HCT116 (cell line): ENCODE measurements at regions of chr18 and their contacts with region 1.

Region 1: GRCh38 chr18:70421471-70422390 is 132.9 kb downstream of the SOCS6 start:
- DNase-seq: peak; percentile 94
- ATAC-seq: peak; percentile 58
- H3K4me3 ChIP-seq: peak overlapping the region in 1 of 2 experiments; percentile 17; a peak in 2 of 4 replicates
- H3K27ac ChIP-seq: peak overlapping the region; percentile 99
- H3K4me1 ChIP-seq: peaks cover 82 to 97% of the 10 kb centered on the region in 2 experiments
- H3K27me3 ChIP-seq: no peaks in the 10 kb centered on the region
- CTCF ChIP-seq: no peak
- POLR2A ChIP-seq: no peak
- RAD21 ChIP-seq: no peak

Region 2: GRCh38 chr18:70355620-70356385 is 65.9 kb before region 1 on chr18:
- CTCF ChIA-PET with region 1: no interaction called
- POLR2A ChIA-PET with region 1: interaction called, 12 read pairs
- RAD21 ChIA-PET with region 1: no interaction called
- intact Hi-C with region 1: loop called (anchors 5 kb)
- DNase-seq: no peak
- ATAC-seq: no peak
- H3K4me3 ChIP-seq: no peak overlapping the region
- H3K27ac ChIP-seq: peak overlapping the region; percentile 98
- H3K4me1 ChIP-seq: peaks cover 43 to 51% of the 10 kb centered on the region in 2 experiments
- H3K27me3 ChIP-seq: no peaks in the 10 kb centered on the region
- CTCF ChIP-seq: no peak
- POLR2A ChIP-seq: no peak
- RAD21 ChIP-seq: no peak